ENCODE measurements at regions of chr3 and their contacts with region 1.

Region 1: GRCh38 chr3:35908366-35909232 is 269.3 kb downstream of the ARPP21 start:
- DNase-seq: peak; percentile 44
- ATAC-seq: peak; percentile 72
- H3K4me3 ChIP-seq: no peak overlapping the region
- H3K27ac ChIP-seq: no peak overlapping the region
- H3K4me1 ChIP-seq: no peaks in the 10 kb centered on the region
- H3K27me3 ChIP-seq: no peaks in the 10 kb centered on the region
- CTCF ChIP-seq: peak; percentile 69
- EP300 ChIP-seq: no peak
- POLR2A ChIP-seq: no peak
- RAD21 ChIP-seq: no peak

Region 2: GRCh38 chr3:34619990-34620389 is 1288.6 kb before region 1 on chr3:
- CTCF ChIA-PET with region 1: no interaction called
- POLR2A ChIA-PET with region 1: no interaction called
- in situ Hi-C with region 1: no loop called
- intact Hi-C with region 1: loop called (anchors 5 kb)
- DNase-seq: no peak
- ATAC-seq: no peak
- H3K4me3 ChIP-seq: no peak overlapping the region
- H3K27ac ChIP-seq: no peak overlapping the region
- H3K4me1 ChIP-seq: no peaks in the 10 kb centered on the region
- H3K27me3 ChIP-seq: no peaks in the 10 kb centered on the region; a peak in 1 of 5 replicates
- CTCF ChIP-seq: no peak
- EP300 ChIP-seq: no peak
- POLR2A ChIP-seq: no peak
- RAD21 ChIP-seq: no peak

Region 3: GRCh38 chr3:36244728-36245127 is 336.1 kb after region 1 on chr3:
- CTCF ChIA-PET with region 1: no interaction called
- POLR2A ChIA-PET with region 1: no interaction called
- in situ Hi-C with region 1: no loop called
- intact Hi-C with region 1: no loop called
- DNase-seq: no peak
- ATAC-seq: no peak
- H3K4me3 ChIP-seq: no peak overlapping the region
- H3K27ac ChIP-seq: no peak overlapping the region
- H3K4me1 ChIP-seq: no peaks in the 10 kb centered on the region
- H3K27me3 ChIP-seq: no peaks in the 10 kb centered on the region
- CTCF ChIP-seq: no peak
- EP300 ChIP-seq: no peak
- POLR2A ChIP-seq: no peak
- RAD21 ChIP-seq: no peak

Measured in HepG2 (cell line).